ENCODE measurements at regions of chr2 and their contacts with region 1.

Region 1: GRCh38 chr2:118784860-118785259 is 62.6 kb downstream of the EN1 start:
- DNase-seq: peak; percentile 49 to 76
- H3K4me3 ChIP-seq: no peak overlapping the region
- H3K27ac ChIP-seq: no peak overlapping the region
- H3K4me1 ChIP-seq: no peaks in the 10 kb centered on the region
- H3K27me3 ChIP-seq: no peaks in the 10 kb centered on the region
- CTCF ChIP-seq: no peak
- POLR2A ChIP-seq: no peak

Region 2: DNA sequence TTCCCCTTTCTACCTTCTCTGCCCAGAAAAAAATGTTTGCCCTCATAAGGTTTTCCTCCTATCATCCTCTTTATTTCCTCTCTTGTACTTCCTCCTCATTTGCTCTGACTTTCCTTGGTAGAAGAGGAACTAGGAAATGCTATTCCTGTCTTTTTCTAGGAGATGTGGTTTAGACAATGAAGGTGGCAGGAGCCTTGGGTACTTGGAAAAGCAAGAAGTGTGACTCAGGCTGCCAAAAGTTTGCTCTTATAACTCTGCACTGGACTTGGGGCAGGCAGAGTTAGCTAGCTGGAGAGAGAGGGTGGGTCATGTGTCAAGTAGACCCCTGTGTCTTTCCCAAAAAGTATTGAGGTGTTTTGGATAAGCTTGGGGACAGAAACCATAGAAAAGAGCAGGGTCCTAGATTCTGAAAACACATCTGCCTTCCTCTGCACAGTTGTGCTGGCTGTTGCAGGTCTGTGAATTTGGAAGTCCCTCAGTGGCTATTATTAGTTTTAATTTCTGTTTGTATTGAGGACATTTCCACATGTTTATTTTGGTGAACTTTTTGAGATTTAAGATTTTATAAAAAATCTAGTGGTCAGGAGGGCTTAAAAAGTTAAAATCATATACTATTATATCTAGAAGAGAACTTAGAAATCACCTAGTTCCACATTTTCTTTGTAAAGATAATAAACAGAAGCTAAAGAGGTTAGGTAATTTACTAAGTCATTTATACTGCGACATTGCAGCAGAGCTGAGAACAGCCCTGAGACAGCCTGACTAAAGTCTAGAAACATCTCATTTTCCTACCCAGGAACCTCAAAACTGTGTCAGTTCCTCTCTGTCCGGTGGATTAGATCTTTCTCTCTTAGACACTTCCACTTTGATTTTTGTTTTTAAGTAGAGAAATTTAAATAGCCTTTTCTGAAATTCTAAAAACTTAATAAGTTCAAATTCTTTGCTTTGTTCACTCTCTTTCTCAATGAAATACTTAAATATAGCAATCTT is 680.6 kb before region 1 on chr2:
- intact Hi-C with region 1: no loop called
- DNase-seq: no peak
- H3K4me3 ChIP-seq: no peak overlapping the region
- H3K27ac ChIP-seq: no peak overlapping the region
- H3K4me1 ChIP-seq: no peaks in the 10 kb centered on the region
- H3K27me3 ChIP-seq: no peaks in the 10 kb centered on the region
- CTCF ChIP-seq: no peak
- POLR2A ChIP-seq: no peak

Region 3: DNA sequence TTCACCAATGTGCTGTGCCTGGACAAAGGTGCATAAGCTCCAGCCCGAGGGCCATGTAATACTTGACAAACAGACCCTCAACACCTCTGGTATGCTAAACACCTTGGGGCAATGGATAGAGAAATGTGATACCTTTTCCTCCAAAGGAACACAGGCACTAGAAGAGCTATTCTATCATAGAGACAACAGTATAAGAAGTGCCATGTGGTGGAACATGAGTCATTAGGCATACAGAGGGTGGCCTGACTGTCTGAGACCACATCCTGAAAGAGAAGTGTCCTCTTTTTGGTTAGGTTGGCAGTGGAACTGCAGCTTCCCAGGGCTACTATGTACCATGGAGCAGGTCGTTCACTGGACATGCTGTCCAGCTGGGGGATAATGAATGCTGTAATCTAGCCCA is 542.6 kb before region 1 on chr2:
- intact Hi-C with region 1: loop called (anchors 5 kb)
- DNase-seq: peak in 1 of 2 donors; percentile 37
- H3K4me3 ChIP-seq: no peak overlapping the region
- H3K27ac ChIP-seq: no peak overlapping the region
- H3K4me1 ChIP-seq: no peaks in the 10 kb centered on the region
- H3K27me3 ChIP-seq: no peaks in the 10 kb centered on the region
- CTCF ChIP-seq: no peak
- POLR2A ChIP-seq: no peak